HCT116 (cell line): ENCODE measurements at regions of chr15 and their contacts with region 1.

Region 1: DNA sequence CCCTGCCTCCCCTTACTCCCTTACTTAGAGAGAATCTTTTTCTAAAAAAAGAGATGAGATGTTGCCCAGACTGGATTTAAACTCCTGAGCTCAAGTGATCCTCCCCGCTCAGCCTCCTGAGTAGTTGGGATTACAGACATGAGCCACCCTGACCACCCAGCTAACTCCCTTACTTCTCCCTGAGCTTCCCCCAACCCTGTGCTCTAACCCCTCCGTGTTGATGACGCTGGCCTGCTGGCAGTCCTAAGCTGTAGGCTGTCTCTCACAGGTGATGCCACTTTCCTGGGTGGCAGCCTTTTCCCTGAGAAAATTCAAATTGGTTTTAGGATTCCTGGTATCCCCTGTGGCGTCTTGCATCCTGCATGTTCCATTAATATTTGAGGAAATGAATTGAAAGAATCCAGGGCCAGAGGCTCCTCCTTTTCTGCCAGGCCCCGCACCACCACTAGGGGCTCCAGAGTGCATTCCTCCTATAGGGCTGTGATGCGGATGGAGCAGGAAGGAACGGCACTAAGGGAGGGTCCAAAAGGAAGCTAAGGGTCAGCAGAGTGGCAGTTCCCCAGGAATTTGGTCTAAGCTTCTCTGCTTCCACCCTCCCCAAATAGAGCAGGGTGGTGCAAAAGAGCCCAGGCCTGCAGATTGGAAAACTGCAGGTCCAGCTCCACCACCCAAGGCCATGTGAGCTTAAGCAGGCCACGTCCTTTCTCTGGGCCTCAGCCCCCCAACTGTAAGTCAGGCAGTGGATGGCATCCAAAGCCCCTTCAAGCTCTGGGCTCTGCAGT is 101.1 kb downstream of the DAPK2 start:
- DNase-seq: peak; percentile 24
- ATAC-seq: peak; percentile 99
- H3K4me3 ChIP-seq: no peak overlapping the region
- H3K27ac ChIP-seq: no peak overlapping the region
- H3K4me1 ChIP-seq: peaks cover 0 to 6% of the 10 kb centered on the region in 2 experiments; a peak in 1 of 4 replicates
- H3K27me3 ChIP-seq: no peaks in the 10 kb centered on the region
- CTCF ChIP-seq: peak; percentile 60 to 99 (median 97); a peak in 5 of 6 replicates
- POLR2A ChIP-seq: no peak
- RAD21 ChIP-seq: peak; percentile 56

Region 2: GRCh38 chr15:61974759-61975158 is 1970.4 kb before region 1 on chr15:
- CTCF ChIA-PET with region 1: no interaction called
- POLR2A ChIA-PET with region 1: no interaction called
- RAD21 ChIA-PET with region 1: no interaction called
- intact Hi-C with region 1: no loop called
- DNase-seq: peak; percentile 8
- ATAC-seq: no peak
- H3K4me3 ChIP-seq: no peak overlapping the region
- H3K27ac ChIP-seq: no peak overlapping the region
- H3K4me1 ChIP-seq: no peaks in the 10 kb centered on the region
- H3K27me3 ChIP-seq: no peaks in the 10 kb centered on the region
- CTCF ChIP-seq: no peak
- POLR2A ChIP-seq: no peak
- RAD21 ChIP-seq: no peak

Region 3: DNA sequence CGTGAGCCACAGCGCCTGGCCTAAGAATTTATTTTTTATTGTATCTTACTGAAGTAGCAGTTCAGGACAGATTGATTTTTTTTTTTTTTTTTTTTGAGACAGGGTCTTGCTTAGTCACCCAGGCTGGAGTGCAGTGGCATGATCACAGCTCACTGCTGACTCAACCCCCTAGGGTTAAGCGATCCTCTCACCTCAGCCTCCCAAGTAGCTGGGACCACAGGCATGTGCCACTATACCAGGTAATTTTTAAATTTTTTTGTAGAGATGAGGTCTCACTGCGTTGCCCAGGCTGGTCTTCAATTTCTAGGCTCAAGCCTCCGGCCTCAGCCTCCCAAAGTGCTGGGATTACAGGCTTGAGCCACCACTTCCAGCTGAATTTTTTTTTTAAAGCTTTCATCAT is 11.7 kb before region 1 on chr15:
- CTCF ChIA-PET with region 1: interaction called, 13 read pairs
- POLR2A ChIA-PET with region 1: no interaction called
- RAD21 ChIA-PET with region 1: no interaction called
- intact Hi-C with region 1: no loop called
- DNase-seq: peak; percentile 8
- ATAC-seq: peak; percentile 79
- H3K4me3 ChIP-seq: no peak overlapping the region
- H3K27ac ChIP-seq: no peak overlapping the region
- H3K4me1 ChIP-seq: peaks cover 8 to 12% of the 10 kb centered on the region in 2 experiments
- H3K27me3 ChIP-seq: no peaks in the 10 kb centered on the region
- CTCF ChIP-seq: no peak
- POLR2A ChIP-seq: no peak
- RAD21 ChIP-seq: no peak